ENCODE measurements at regions of chrX and their contacts with region 1.

Region 1: DNA sequence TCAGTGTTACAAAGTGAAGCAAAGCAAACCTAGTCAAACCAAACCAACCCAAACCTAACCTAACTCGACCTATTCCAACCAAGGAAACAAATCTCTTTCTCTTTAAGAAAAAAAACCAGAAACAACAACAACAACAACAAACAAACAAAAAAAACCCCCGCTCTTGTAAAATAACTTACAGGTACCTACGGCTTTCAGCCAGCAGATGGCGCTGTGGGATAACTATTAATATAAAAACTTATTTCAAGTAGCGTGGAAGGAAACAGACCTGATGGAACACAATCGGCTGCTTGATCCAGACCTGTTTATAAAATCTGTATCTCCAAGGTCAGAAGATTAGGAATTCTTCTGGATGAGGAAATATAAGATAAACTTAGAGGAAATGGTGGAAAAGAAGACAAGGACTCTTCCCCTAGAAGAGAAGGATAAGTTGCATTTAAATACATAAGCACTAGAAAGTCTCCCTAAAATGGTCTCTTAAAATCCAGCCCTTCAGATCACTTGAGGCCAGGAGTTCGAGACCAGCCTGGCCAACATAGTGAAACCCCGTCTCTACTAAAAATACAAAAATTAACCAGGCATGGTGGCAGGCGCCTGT is 34.4 kb upstream of the CDKL5 start:
- DNase-seq: peak; percentile 70
- ATAC-seq: peak; percentile 24
- H3K4me3 ChIP-seq: no peak overlapping the region
- H3K4me3 Mint-ChIP-seq: no peak overlapping the region
- H3K27ac ChIP-seq: no peak overlapping the region
- H3K27ac Mint-ChIP-seq: no peak overlapping the region
- H3K4me1 ChIP-seq: no peaks in the 10 kb centered on the region
- H3K4me1 Mint-ChIP-seq: peaks cover 2% of the 10 kb centered on the region
- H3K27me3 ChIP-seq: no peaks in the 10 kb centered on the region
- H3K27me3 Mint-ChIP-seq: no peaks in the 10 kb centered on the region
- CTCF ChIP-seq: peak; percentile 70

Region 2: DNA sequence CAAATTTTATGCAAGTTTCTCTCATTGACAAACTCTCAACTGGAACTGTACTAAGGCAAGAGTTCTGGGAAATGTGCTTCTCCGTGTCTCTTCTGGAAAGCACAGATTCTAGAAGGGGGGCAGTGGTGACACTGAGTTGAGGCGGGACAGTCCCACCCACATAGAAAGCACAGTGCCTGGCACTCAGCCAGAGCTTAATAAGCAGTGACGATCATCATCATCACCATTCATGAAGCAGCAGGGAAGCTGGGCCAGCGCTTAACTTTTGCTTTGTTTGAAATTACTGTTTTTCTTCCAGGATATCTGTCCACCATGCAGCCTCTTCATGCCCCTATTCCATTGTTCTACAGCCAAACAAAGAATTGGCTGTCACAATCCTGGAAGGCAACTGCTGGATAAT is 230.7 kb before region 1 on chrX:
- CTCF ChIA-PET with region 1: no interaction called
- POLR2A ChIA-PET with region 1: no interaction called
- intact Hi-C with region 1: no loop called
- DNase-seq: no peak
- ATAC-seq: no peak
- H3K4me3 ChIP-seq: no peak overlapping the region
- H3K4me3 Mint-ChIP-seq: no peak overlapping the region
- H3K27ac ChIP-seq: no peak overlapping the region
- H3K27ac Mint-ChIP-seq: no peak overlapping the region
- H3K4me1 ChIP-seq: no peaks in the 10 kb centered on the region
- H3K4me1 Mint-ChIP-seq: no peaks in the 10 kb centered on the region
- H3K27me3 ChIP-seq: no peaks in the 10 kb centered on the region
- H3K27me3 Mint-ChIP-seq: no peaks in the 10 kb centered on the region
- CTCF ChIP-seq: no peak

Region 3: DNA sequence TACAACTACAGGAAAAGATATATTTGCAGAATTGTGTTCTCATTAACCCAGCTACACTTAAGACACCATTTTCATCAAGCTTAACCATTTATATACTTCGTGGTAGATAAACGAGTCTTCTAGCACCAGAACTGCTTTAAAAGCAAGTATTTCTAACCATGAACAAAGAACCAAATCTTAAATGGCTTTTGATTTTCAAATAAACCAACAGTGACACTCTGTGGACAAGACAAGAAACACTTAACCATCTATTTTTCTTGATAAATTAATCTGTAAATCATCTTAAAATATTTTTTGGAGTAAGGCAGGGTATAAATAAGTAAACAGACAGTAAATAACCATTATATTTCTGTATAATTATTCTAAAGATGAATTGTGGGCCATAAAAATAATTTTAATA is 180.6 kb before region 1 on chrX:
- CTCF ChIA-PET with region 1: no interaction called
- POLR2A ChIA-PET with region 1: no interaction called
- intact Hi-C with region 1: no loop called
- DNase-seq: no peak
- ATAC-seq: no peak
- H3K4me3 ChIP-seq: no peak overlapping the region
- H3K4me3 Mint-ChIP-seq: no peak overlapping the region
- H3K27ac ChIP-seq: no peak overlapping the region
- H3K27ac Mint-ChIP-seq: no peak overlapping the region
- H3K4me1 ChIP-seq: no peaks in the 10 kb centered on the region
- H3K4me1 Mint-ChIP-seq: no peaks in the 10 kb centered on the region
- H3K27me3 ChIP-seq: no peaks in the 10 kb centered on the region
- H3K27me3 Mint-ChIP-seq: peaks cover 4% of the 10 kb centered on the region
- CTCF ChIP-seq: no peak

Region 4: GRCh38 chrX:18465051-18465450 is 74.0 kb after region 1 on chrX:
- CTCF ChIA-PET with region 1: no interaction called
- POLR2A ChIA-PET with region 1: no interaction called
- intact Hi-C with region 1: no loop called
- DNase-seq: no peak
- ATAC-seq: no peak
- H3K4me3 ChIP-seq: no peak overlapping the region
- H3K4me3 Mint-ChIP-seq: no peak overlapping the region
- H3K27ac ChIP-seq: no peak overlapping the region
- H3K27ac Mint-ChIP-seq: no peak overlapping the region
- H3K4me1 ChIP-seq: no peaks in the 10 kb centered on the region
- H3K4me1 Mint-ChIP-seq: no peaks in the 10 kb centered on the region
- H3K27me3 ChIP-seq: no peaks in the 10 kb centered on the region
- H3K27me3 Mint-ChIP-seq: no peaks in the 10 kb centered on the region
- CTCF ChIP-seq: no peak

Region 5: GRCh38 chrX:19334945-19335626 is 944.0 kb after region 1 on chrX:
- CTCF ChIA-PET with region 1: interaction called, 16 read pairs
- POLR2A ChIA-PET with region 1: no interaction called
- intact Hi-C with region 1: loop called (anchors 1 kb)
- DNase-seq: peak; percentile 27
- ATAC-seq: no peak
- H3K4me3 ChIP-seq: no peak overlapping the region
- H3K4me3 Mint-ChIP-seq: no peak overlapping the region
- H3K27ac ChIP-seq: no peak overlapping the region
- H3K27ac Mint-ChIP-seq: no peak overlapping the region
- H3K4me1 ChIP-seq: no peaks in the 10 kb centered on the region
- H3K4me1 Mint-ChIP-seq: no peaks in the 10 kb centered on the region
- H3K27me3 ChIP-seq: no peaks in the 10 kb centered on the region
- H3K27me3 Mint-ChIP-seq: no peaks in the 10 kb centered on the region
- CTCF ChIP-seq: peak; percentile 2

Region 6: GRCh38 chrX:19535476-19535875 is 1144.4 kb after region 1 on chrX:
- CTCF ChIA-PET with region 1: no interaction called
- POLR2A ChIA-PET with region 1: no interaction called
- intact Hi-C with region 1: loop called (anchors 10 kb)
- DNase-seq: no peak
- ATAC-seq: no peak
- H3K4me3 ChIP-seq: no peak overlapping the region
- H3K4me3 Mint-ChIP-seq: no peak overlapping the region
- H3K27ac ChIP-seq: no peak overlapping the region
- H3K27ac Mint-ChIP-seq: no peak overlapping the region
- H3K4me1 ChIP-seq: no peaks in the 10 kb centered on the region
- H3K4me1 Mint-ChIP-seq: no peaks in the 10 kb centered on the region
- H3K27me3 ChIP-seq: no peaks in the 10 kb centered on the region
- H3K27me3 Mint-ChIP-seq: no peaks in the 10 kb centered on the region
- CTCF ChIP-seq: no peak